ENCODE measurements at regions of chr9 and their contacts with region 1.

Region 1: GRCh38 chr9:70602321-70603019 is 188.0 kb upstream of the KLF9 start:
- DNase-seq: peak; percentile 41
- H3K4me3 Mint-ChIP-seq: no peak overlapping the region
- H3K27ac Mint-ChIP-seq: no peak overlapping the region
- H3K4me1 Mint-ChIP-seq: peaks cover 15% of the 10 kb centered on the region
- H3K27me3 Mint-ChIP-seq: no peaks in the 10 kb centered on the region
- CTCF ChIP-seq: peak; percentile 37

Region 2: GRCh38 chr9:69971643-69972449 is 630.6 kb before region 1 on chr9:
- CTCF ChIA-PET with region 1: no interaction called
- intact Hi-C with region 1: loop called (anchors 1 kb)
- DNase-seq: peak; percentile 67
- H3K4me3 Mint-ChIP-seq: no peak overlapping the region
- H3K27ac Mint-ChIP-seq: peak overlapping the region; percentile 37
- H3K4me1 Mint-ChIP-seq: peaks cover 8% of the 10 kb centered on the region
- H3K27me3 Mint-ChIP-seq: no peaks in the 10 kb centered on the region
- CTCF ChIP-seq: peak; percentile 72

Region 3: DNA sequence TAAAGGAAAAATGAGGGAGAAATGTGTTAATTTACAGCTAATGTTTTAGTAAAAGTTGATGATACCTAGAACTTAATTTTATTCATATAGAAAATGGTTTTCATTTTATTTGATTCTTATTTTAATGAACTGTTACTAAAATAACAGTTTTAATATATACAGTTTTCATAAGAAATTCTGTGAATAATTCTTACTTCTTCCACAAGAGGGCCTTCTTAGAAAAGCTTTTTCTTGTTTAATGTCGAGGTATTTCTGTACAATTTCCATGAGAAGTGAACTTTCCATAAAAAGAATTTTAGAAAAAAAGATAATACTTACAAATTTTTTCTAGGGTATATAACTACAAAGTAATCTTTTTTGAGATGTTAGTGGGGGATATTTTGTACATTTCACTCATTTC is 261.9 kb before region 1 on chr9:
- CTCF ChIA-PET with region 1: interaction called, 18 read pairs
- intact Hi-C with region 1: loop called (anchors 1 kb)
- DNase-seq: no peak
- H3K4me3 Mint-ChIP-seq: no peak overlapping the region
- H3K27ac Mint-ChIP-seq: no peak overlapping the region
- H3K4me1 Mint-ChIP-seq: no peaks in the 10 kb centered on the region
- H3K27me3 Mint-ChIP-seq: no peaks in the 10 kb centered on the region
- CTCF ChIP-seq: no peak

Region 4: GRCh38 chr9:70362952-70363351 is 239.5 kb before region 1 on chr9:
- CTCF ChIA-PET with region 1: interaction called, 14 read pairs
- intact Hi-C with region 1: no loop called
- DNase-seq: no peak
- H3K4me3 Mint-ChIP-seq: no peak overlapping the region
- H3K27ac Mint-ChIP-seq: no peak overlapping the region
- H3K4me1 Mint-ChIP-seq: no peaks in the 10 kb centered on the region
- H3K27me3 Mint-ChIP-seq: no peaks in the 10 kb centered on the region
- CTCF ChIP-seq: no peak

Region 5: GRCh38 chr9:70484210-70485130 is 118.0 kb before region 1 on chr9:
- CTCF ChIA-PET with region 1: interaction called, 10 read pairs
- intact Hi-C with region 1: loop called (anchors 5 kb)
- DNase-seq: peak; percentile 24
- H3K4me3 Mint-ChIP-seq: no peak overlapping the region
- H3K27ac Mint-ChIP-seq: no peak overlapping the region
- H3K4me1 Mint-ChIP-seq: peaks cover 19% of the 10 kb centered on the region
- H3K27me3 Mint-ChIP-seq: no peaks in the 10 kb centered on the region
- CTCF ChIP-seq: peak; percentile 37

Measured in Calu3 (cell line).